Activated B cell treated with CpG ODN at 0.5 μM for 24 hours (primary cell): ENCODE measurements at regions of chr17 and their contacts with region 1.

Region 1: GRCh38 chr17:18933102-18934058 is 18.6 kb upstream of the SLC5A10 start:
- DNase-seq: no peak
- ATAC-seq: peak; percentile 61
- H3K4me3 Mint-ChIP-seq: no peak overlapping the region
- H3K27ac Mint-ChIP-seq: no peak overlapping the region
- H3K4me1 Mint-ChIP-seq: peaks cover 15% of the 10 kb centered on the region
- H3K27me3 Mint-ChIP-seq: no peaks in the 10 kb centered on the region
- CTCF ChIP-seq: no peak

Region 2: GRCh38 chr17:18921912-18922451 is 11.4 kb before region 1 on chr17:
- CTCF ChIA-PET with region 1: interaction called, 3 read pairs
- POLR2A ChIA-PET with region 1: interaction called, 13 read pairs
- intact Hi-C with region 1: no loop called
- DNase-seq: no peak
- ATAC-seq: peak; percentile 79
- H3K4me3 Mint-ChIP-seq: peak overlapping the region; percentile 79
- H3K27ac Mint-ChIP-seq: peak overlapping the region; percentile 95
- H3K4me1 Mint-ChIP-seq: peaks cover 70% of the 10 kb centered on the region
- H3K27me3 Mint-ChIP-seq: no peaks in the 10 kb centered on the region
- CTCF ChIP-seq: no peak

Region 3: DNA sequence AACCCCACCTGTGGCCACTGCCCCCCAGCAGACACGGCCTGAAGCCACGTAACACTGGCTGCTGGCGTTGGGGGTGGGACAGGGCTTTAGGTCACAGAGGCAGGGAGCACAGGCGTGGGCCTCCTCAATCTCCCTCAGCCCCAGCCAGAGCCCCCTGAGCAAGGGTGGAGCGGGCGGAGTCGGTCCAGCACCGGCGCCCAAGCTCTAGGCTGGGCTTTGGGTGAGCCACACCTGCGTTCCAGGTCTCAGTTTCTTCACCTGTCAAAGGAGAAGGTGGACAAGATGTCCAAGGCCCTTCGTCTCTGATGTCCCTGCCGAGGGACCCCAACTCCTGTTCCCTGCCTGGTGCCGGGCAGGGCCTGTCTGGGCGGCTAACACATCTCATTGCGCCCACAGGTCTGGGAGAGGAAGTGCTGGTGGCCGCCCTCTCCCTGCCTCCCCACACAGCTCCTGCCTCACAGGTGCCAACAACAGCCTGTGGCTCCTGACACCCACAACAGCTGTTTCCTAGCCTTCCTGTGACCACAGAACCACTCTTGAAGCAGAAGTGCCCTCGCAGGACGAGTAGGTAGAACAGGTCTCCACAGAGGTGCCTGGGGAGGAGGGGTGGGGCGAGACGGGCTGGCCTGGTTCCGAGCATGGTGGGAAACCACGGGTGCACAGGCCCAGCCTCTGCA is 59.2 kb after region 1 on chr17:
- CTCF ChIA-PET with region 1: no interaction called
- POLR2A ChIA-PET with region 1: no interaction called
- intact Hi-C with region 1: no loop called
- DNase-seq: peak; percentile 26
- ATAC-seq: peak; percentile 69
- H3K4me3 Mint-ChIP-seq: peak overlapping the region; percentile 41
- H3K27ac Mint-ChIP-seq: no peak overlapping the region
- H3K4me1 Mint-ChIP-seq: peaks cover 22% of the 10 kb centered on the region
- H3K27me3 Mint-ChIP-seq: no peaks in the 10 kb centered on the region
- CTCF ChIP-seq: no peak